Activated T-helper 2 cell treated with anti-CD3 and anti-CD28 coated beads, Interferon-gamma antibody, Interleukin-2, Interleukin-4, amounts not matched to agents 10 μg/mL and 5 μg/mL and 100 μg/mL, durations not matched to agents 14 hours and 24 hours and 36 hours (primary cell): ENCODE measurements at regions of chr1 and their contacts with region 1.

Region 1: DNA sequence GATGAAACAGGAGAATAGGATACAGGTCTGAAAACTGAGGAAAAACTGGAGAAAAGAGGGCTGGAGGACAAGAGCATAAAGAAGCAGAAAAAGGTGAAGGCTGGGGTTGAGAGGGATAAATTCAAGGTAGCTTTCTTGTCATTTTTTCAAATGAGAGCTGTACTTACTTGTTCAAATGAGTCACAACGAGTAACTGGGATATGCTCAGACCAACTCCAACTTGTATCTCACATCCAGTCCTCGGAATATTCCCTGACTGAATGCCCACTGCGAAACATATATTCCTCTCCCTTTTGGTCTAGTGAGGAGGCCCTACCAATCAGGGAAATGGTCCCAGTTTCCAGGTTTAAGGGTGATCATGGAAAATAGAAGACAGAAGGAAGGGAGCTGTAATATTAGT is 343.4 kb downstream of the HHIPL2 start:
- DNase-seq: no peak
- H3K4me3 Mint-ChIP-seq: no peak overlapping the region
- H3K27ac Mint-ChIP-seq: no peak overlapping the region
- H3K4me1 Mint-ChIP-seq: no peaks in the 10 kb centered on the region
- H3K27me3 Mint-ChIP-seq: no peaks in the 10 kb centered on the region

Region 2: DNA sequence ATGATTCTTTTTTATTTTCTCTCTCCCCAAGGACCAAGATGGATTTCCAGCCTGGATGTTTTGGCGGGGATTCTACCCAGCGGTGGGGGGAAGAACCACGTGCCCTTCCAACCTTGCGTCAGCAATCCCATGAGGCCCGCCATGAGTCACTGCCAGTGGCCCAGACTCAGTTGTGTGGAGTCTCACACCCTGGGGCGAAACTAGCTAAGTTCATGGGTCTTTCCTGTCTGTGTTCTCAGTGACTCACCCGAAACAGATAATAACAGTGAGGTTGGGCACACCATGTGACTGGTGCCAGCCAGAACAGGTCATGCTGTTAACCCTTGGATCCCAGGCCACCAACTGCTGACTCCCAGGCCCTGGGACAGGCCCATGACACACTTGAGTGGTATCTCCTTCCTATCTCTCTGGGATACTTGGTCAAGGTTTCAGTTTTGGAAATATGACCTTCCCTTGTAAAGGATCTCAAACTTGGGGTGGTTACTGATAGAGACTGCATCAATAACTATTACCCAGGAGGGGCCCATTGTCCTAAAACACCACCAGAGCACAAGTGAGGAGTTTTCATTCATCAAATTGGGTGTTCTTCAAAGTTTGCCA is 364.6 kb before region 1 on chr1:
- intact Hi-C with region 1: no loop called
- DNase-seq: peak; percentile 33
- H3K4me3 Mint-ChIP-seq: no peak overlapping the region
- H3K27ac Mint-ChIP-seq: peak overlapping the region; percentile 60
- H3K4me1 Mint-ChIP-seq: peaks cover 48% of the 10 kb centered on the region
- H3K27me3 Mint-ChIP-seq: peaks cover 4% of the 10 kb centered on the region

Region 3: DNA sequence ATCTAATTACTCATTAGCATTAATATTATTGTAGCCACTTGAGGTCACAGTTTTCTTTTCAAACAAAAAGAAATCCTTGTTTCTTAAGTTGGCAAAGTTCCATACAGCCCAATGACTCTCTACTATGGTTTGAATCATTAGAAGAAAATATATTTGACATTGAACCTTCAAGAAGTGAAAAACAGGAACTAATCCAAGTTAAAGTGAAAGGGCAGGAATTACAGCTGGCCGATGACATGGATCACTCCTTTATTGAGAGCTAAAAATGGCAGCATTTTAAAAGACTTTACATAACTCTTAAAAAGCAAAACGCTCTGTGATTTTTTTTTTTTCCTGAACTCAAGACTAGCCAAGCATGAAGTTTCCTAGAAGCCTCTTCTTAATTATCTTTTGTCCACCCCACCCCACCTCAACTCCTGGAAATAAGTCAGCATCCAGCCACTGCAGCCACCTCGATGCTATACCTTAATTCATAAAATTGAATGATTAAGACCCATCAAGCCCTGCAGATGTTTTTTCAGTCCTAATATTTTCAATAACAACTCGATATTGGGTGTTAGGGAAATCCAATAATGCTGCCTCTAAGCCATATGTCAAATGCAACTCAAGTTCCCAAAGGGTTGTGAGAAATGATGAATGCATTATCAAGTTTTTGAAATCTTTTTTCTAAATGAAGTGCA is 20.3 kb after region 1 on chr1:
- intact Hi-C with region 1: loop called (anchors 1 kb)
- DNase-seq: no peak
- H3K4me3 Mint-ChIP-seq: no peak overlapping the region
- H3K27ac Mint-ChIP-seq: no peak overlapping the region
- H3K4me1 Mint-ChIP-seq: no peaks in the 10 kb centered on the region
- H3K27me3 Mint-ChIP-seq: no peaks in the 10 kb centered on the region